Caco-2 (cell line): ENCODE measurements at regions of chr2 and their contacts with region 1.

Region 1: GRCh38 chr2:122191341-122191740 is 435.9 kb downstream of the TSN start:
- DNase-seq: peak; percentile 55 to 59
- H3K4me3 ChIP-seq: no peak overlapping the region
- H3K4me3 Mint-ChIP-seq: no peak overlapping the region
- H3K27ac Mint-ChIP-seq: no peak overlapping the region
- H3K4me1 ChIP-seq: no peaks in the 10 kb centered on the region
- H3K4me1 Mint-ChIP-seq: no peaks in the 10 kb centered on the region
- H3K27me3 ChIP-seq: no peaks in the 10 kb centered on the region
- H3K27me3 Mint-ChIP-seq: peaks cover 6% of the 10 kb centered on the region
- CTCF ChIP-seq: peak; percentile 31 to 56

Region 2: DNA sequence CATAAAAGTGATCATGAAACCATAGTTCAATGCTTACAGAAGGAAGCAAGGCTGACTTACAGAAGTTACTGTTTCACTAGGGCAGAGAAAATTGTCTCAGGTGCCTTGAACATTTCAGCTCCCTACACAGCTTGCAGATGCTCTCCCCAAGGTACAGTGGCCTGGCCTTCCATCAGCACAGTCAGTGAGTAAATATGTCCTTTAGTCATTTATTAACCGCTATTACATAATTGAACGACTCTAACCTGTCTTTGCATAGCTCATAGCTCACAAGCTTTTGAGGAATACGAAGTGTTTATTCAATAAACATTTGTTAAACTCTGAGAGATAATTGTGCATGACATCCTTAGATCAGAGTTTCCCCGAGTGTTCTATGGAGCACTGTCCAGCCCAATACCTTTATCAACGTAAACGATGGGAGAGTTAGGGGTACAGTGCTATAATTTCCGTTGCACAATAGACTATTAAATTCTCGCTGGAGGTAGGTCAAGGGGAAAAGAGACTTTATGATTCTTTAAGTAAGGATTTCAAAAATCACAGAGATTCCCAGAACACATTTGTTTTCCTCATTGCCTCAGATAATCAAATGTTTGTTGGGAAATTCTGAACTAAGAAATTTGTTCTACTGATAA is 241.9 kb after region 1 on chr2:
- CTCF ChIA-PET with region 1: no interaction called
- POLR2A ChIA-PET with region 1: no interaction called
- intact Hi-C with region 1: loop called (anchors 5 kb)
- DNase-seq: peak; percentile 69 to 86
- H3K4me3 ChIP-seq: no peak overlapping the region
- H3K4me3 Mint-ChIP-seq: peak overlapping the region; percentile 28
- H3K27ac Mint-ChIP-seq: peak overlapping the region; percentile 66
- H3K4me1 ChIP-seq: peaks cover 24% of the 10 kb centered on the region
- H3K4me1 Mint-ChIP-seq: peaks cover 21% of the 10 kb centered on the region
- H3K27me3 ChIP-seq: no peaks in the 10 kb centered on the region
- H3K27me3 Mint-ChIP-seq: no peaks in the 10 kb centered on the region
- CTCF ChIP-seq: no peak